ENCODE measurements at regions of chr1 and their contacts with region 1.

Region 1: GRCh38 chr1:231584921-231585320 is 41.7 kb upstream of the DISC1 start:
- DNase-seq: no peak
- H3K4me3 ChIP-seq: no peak overlapping the region
- H3K27ac ChIP-seq: no peak overlapping the region
- H3K4me1 ChIP-seq: no peaks in the 10 kb centered on the region
- H3K27me3 ChIP-seq: no peaks in the 10 kb centered on the region
- CTCF ChIP-seq: no peak
- EP300 ChIP-seq: no peak
- POLR2A ChIP-seq: no peak

Region 2: DNA sequence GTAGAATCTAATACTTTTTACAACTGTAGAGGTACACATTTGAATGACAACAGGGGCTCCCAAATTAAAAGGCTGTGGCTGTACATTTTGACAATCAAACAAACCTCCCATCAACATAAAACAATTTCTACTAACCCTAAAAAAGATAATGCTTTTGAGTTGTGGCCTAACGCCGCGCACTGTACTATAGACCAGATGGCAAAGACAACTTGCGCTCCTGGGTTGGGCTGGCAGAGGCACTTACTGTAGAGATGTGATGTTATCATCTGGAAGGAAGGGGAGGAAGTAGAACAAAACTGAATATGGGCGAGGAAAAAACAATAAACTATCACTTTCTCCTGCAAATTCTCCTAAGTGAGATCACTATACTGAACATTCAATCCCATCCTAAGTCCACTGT is 220.7 kb before region 1 on chr1:
- in situ Hi-C with region 1: loop called in 1 of 4 experiments (anchors 5 kb)
- intact Hi-C with region 1: loop called (anchors 5 kb)
- DNase-seq: no peak
- H3K4me3 ChIP-seq: no peak overlapping the region
- H3K27ac ChIP-seq: no peak overlapping the region
- H3K4me1 ChIP-seq: no peaks in the 10 kb centered on the region
- H3K27me3 ChIP-seq: no peaks in the 10 kb centered on the region
- CTCF ChIP-seq: no peak
- EP300 ChIP-seq: no peak
- POLR2A ChIP-seq: no peak